Activated B cell treated with CpG ODN at 0.5 μM for 24 hours (primary cell): ENCODE measurements at regions of chr14 and their contacts with region 1.

Region 1: DNA sequence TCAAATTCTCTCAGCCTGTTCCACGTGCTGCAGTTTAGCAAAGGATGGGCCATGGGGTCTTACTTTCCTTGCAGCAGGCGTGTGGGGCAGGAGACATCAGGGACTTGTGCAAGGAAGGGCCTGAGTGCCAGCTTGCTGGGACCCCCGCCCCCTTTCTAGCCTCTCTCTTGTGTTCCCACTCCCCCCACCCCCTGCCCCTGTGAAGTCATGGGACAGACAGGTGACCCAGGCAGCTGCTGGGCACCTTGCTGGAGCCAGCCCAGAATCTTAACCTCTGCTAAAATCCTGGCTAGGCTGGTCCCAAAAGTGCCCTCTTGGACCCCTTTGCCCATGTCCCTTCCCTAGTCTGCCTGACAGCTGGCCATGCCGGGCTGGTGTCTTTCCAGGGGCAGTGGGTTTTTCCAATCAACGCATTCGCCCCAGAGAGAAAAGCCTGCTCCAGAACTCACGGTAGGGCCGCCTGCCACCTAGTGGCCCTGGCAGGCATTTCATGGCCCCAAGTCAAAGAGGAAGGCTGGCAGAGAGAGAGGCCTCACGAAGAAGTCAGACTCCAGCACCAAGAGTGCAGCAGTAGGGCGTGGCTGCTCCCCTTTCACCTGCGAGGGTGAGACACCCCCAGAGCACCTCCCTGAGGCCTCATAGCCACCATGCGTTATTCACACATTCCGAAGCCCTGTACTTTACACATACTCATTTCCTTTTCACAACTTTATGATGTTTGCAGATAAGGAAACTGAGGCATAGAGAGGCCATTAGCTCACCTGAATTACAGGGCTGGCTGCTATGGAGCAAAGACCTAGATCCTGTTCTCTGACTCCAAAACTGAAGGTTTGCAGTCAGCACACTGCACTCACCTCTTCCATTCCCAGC is 67.4 kb downstream of the LGMN start:
- DNase-seq: peak; percentile 75
- ATAC-seq: peak; percentile 15
- H3K4me3 Mint-ChIP-seq: no peak overlapping the region
- H3K27ac Mint-ChIP-seq: peak overlapping the region; percentile 70
- H3K4me1 Mint-ChIP-seq: peaks cover 39% of the 10 kb centered on the region
- H3K27me3 Mint-ChIP-seq: no peaks in the 10 kb centered on the region
- CTCF ChIP-seq: no peak

Region 2: GRCh38 chr14:90999299-90999698 is 1681.7 kb before region 1 on chr14:
- CTCF ChIA-PET with region 1: no interaction called
- POLR2A ChIA-PET with region 1: no interaction called
- intact Hi-C with region 1: no loop called
- DNase-seq: no peak
- ATAC-seq: no peak
- H3K4me3 Mint-ChIP-seq: no peak overlapping the region
- H3K27ac Mint-ChIP-seq: peak overlapping the region; percentile 16
- H3K4me1 Mint-ChIP-seq: peaks cover 32% of the 10 kb centered on the region
- H3K27me3 Mint-ChIP-seq: no peaks in the 10 kb centered on the region
- CTCF ChIP-seq: no peak

Region 3: GRCh38 chr14:92121670-92122350 is 559.2 kb before region 1 on chr14 and contains the starts of genes CPSF2 and NDUFB1:
- CTCF ChIA-PET with region 1: interaction called, 3 read pairs
- POLR2A ChIA-PET with region 1: interaction called, 12 read pairs
- intact Hi-C with region 1: loop called (anchors 5 kb)
- DNase-seq: peak; percentile 78
- ATAC-seq: peak; percentile 92
- H3K4me3 Mint-ChIP-seq: peak within 1 kb of the TSS; percentile 100
- H3K27ac Mint-ChIP-seq: peak within 1 kb of the TSS; percentile 100
- H3K4me1 Mint-ChIP-seq: peaks cover 35% of the 10 kb centered on the region
- H3K27me3 Mint-ChIP-seq: no peaks in the 10 kb centered on the region
- CTCF ChIP-seq: no peak
- total RNA-seq, gene CPSF2: 46.9 and 53.2 TPM in 2 replicates
- total RNA-seq, gene NDUFB1: 88.2 and 94.2 TPM in 2 replicates

Region 4: GRCh38 chr14:92400579-92401444 is 280.2 kb before region 1 on chr14:
- CTCF ChIA-PET with region 1: interaction called, 3 read pairs
- POLR2A ChIA-PET with region 1: no interaction called
- intact Hi-C with region 1: loop called (anchors 1 kb)
- DNase-seq: no peak
- ATAC-seq: peak; percentile 85
- H3K4me3 Mint-ChIP-seq: peak overlapping the region; percentile 29
- H3K27ac Mint-ChIP-seq: peak overlapping the region; percentile 77
- H3K4me1 Mint-ChIP-seq: peaks cover 32% of the 10 kb centered on the region
- H3K27me3 Mint-ChIP-seq: no peaks in the 10 kb centered on the region
- CTCF ChIP-seq: no peak

Region 5: DNA sequence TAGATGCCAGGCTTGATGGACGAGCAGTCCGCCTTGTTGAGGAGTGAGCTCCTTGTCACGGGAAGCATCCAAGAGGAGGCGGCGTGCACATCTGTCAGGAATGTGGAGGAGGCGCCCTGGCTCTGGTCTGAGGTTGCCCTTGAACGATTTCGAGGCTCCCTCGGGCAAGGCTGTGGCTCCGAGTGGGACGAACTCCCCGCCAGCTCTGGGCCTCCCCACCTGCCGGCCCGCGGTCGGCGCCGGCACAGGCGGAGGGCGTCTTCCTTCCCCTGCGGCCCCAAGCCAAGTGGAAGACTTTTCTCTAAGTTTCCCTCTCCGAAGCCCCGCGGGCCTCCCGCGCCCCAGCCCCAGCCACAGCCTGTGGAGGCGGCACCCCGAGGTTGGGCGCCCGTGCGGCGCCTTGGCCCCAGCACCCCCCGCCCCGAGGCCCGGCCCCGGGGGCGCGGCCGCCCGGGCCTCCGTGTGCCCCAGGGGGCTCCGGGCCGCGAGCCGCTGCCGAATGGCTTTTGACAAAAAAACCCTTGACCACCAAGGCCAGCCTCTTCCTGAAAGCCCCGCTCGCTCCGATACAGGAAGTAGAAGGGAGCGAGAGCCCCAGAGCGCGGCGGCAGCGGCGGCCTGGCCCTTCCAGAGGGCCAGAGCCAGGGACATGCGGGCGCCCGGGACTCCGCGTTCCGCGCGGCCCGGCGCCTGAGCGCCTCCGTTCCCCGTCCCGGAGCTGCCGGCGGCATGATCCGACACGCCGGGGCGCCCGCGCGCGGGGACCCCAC is 167.6 kb before region 1 on chr14 and contains the start of gene RIN3:
- CTCF ChIA-PET with region 1: no interaction called
- POLR2A ChIA-PET with region 1: no interaction called
- intact Hi-C with region 1: loop called (anchors 2 kb)
- DNase-seq: peak; percentile 61
- ATAC-seq: peak; percentile 67
- H3K4me3 Mint-ChIP-seq: peak within 1 kb of the TSS; percentile 80
- H3K27ac Mint-ChIP-seq: peak within 1 kb of the TSS; percentile 41
- H3K4me1 Mint-ChIP-seq: peaks cover 44% of the 10 kb centered on the region
- H3K27me3 Mint-ChIP-seq: no peaks in the 10 kb centered on the region
- CTCF ChIP-seq: no peak
- total RNA-seq, gene RIN3: 61.3 and 62.6 TPM in 2 replicates

Region 6: GRCh38 chr14:92612988-92613658 is 67.9 kb before region 1 on chr14:
- CTCF ChIA-PET with region 1: interaction called, 71 read pairs
- POLR2A ChIA-PET with region 1: interaction called, 55 read pairs
- intact Hi-C with region 1: loop called (anchors 1 kb)
- DNase-seq: peak; percentile 58
- ATAC-seq: peak; percentile 8
- H3K4me3 Mint-ChIP-seq: peak overlapping the region; percentile 46
- H3K27ac Mint-ChIP-seq: peak overlapping the region; percentile 75
- H3K4me1 Mint-ChIP-seq: peaks cover 74% of the 10 kb centered on the region
- H3K27me3 Mint-ChIP-seq: no peaks in the 10 kb centered on the region
- CTCF ChIP-seq: no peak

Region 7: DNA sequence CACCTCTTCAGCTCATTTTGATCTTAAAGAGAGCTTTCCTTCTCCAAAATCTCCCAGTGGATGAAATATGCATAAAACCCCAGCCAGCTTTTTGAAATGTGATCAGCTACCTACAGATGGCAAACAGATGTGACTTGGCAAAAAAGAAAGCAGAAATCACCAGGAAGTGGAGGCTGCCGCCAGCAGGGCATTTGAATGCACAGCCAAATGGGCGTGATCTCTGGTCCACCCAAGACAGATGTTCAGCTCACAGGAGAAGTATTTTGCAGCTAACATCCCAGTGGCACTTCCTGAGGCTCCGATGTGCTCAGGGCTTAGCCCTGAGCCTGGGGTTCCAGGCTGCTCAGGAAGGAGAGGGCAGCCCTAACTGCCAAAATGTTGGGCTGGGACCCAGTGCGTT is 10.9 kb before region 1 on chr14:
- CTCF ChIA-PET with region 1: interaction called, 5 read pairs
- POLR2A ChIA-PET with region 1: interaction called, 8 read pairs
- intact Hi-C with region 1: loop called (anchors 1 kb)
- DNase-seq: no peak
- ATAC-seq: no peak
- H3K4me3 Mint-ChIP-seq: peak overlapping the region; percentile 13
- H3K27ac Mint-ChIP-seq: peak overlapping the region; percentile 52
- H3K4me1 Mint-ChIP-seq: peaks cover 84% of the 10 kb centered on the region
- H3K27me3 Mint-ChIP-seq: no peaks in the 10 kb centered on the region
- CTCF ChIP-seq: no peak